ENCODE measurements at regions of chr18 and their contacts with region 1.

Region 1: GRCh38 chr18:56901919-56902318 is 245.0 kb upstream of the BOD1L2 start:
- DNase-seq: no peak
- H3K4me3 ChIP-seq: no peak overlapping the region
- H3K27ac ChIP-seq: no peak overlapping the region
- H3K27me3 ChIP-seq: no peaks in the 10 kb centered on the region
- CTCF ChIP-seq: no peak

Region 2: GRCh38 chr18:56831988-56832387 is 69.9 kb before region 1 on chr18:
- CTCF ChIA-PET with region 1: no interaction called
- POLR2A ChIA-PET with region 1: no interaction called
- DNase-seq: no peak
- H3K4me3 ChIP-seq: no peak overlapping the region
- H3K27ac ChIP-seq: no peak overlapping the region
- H3K27me3 ChIP-seq: no peaks in the 10 kb centered on the region
- CTCF ChIP-seq: no peak

Region 3: GRCh38 chr18:57188851-57189557 is 287.1 kb after region 1 on chr18:
- CTCF ChIA-PET with region 1: interaction called, 10 read pairs
- POLR2A ChIA-PET with region 1: no interaction called
- DNase-seq: no peak
- H3K4me3 ChIP-seq: no peak overlapping the region
- H3K27ac ChIP-seq: no peak overlapping the region
- H3K27me3 ChIP-seq: peaks cover 2% of the 10 kb centered on the region
- CTCF ChIP-seq: no peak

Measured in AG04450 (cell line).